Activated CD4-positive, alpha-beta T cell treated with anti-CD3 and anti-CD28 coated beads, Interleukin-2, amount 10 ng/mL, durations not matched to agents 24 days and 14 days (primary cell): ENCODE measurements at regions of chr5 and their contacts with region 1.

Region 1: GRCh38 chr5:171342362-171343111 is 33.5 kb downstream of the TLX3 start:
- DNase-seq: peak; percentile 76
- H3K4me3 Mint-ChIP-seq: no peak overlapping the region
- H3K27ac Mint-ChIP-seq: no peak overlapping the region
- H3K4me1 Mint-ChIP-seq: no peaks in the 10 kb centered on the region
- H3K27me3 Mint-ChIP-seq: peaks cover 7% of the 10 kb centered on the region

Region 2: DNA sequence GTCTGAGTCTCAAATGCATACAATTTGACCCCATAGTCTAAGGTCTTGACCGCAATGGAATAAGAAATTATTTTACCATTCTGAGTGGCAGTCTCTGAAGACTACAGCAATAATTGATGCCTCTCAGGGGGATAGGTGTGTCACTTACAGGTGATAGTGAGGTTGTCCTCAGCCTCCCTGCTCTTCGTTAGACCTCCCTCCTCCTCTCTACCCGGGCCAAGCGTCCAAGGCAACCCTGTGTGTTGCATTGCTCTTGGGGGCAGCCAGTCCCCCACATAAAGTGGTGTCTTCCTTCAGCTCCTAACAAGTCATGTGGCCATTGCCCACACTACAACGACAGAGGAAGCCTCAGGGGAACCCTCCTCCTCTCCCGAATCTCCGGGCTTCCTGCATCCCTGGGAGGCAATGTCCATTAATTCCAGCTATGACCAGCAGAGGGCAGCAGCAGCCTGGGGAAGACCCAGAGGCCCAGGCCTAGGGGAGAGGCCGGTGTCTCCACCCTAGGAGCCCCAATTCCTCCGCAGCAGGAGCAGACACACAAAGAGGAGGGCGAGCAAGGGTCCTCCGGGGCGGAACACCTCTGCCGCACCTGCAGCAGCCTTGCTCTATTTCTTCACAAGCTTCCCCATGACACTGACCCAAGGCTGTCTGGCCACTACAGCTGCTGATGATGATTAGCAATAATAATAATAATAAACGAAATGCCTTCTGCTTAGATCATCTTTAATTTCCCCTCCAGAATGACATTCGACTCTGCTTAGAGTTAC is 703.9 kb before region 1 on chr5:
- intact Hi-C with region 1: loop called (anchors 2 kb)
- DNase-seq: peak; percentile 89
- H3K4me3 Mint-ChIP-seq: no peak overlapping the region
- H3K27ac Mint-ChIP-seq: no peak overlapping the region
- H3K4me1 Mint-ChIP-seq: peaks cover 3% of the 10 kb centered on the region
- H3K27me3 Mint-ChIP-seq: peaks cover 12% of the 10 kb centered on the region

Region 3: DNA sequence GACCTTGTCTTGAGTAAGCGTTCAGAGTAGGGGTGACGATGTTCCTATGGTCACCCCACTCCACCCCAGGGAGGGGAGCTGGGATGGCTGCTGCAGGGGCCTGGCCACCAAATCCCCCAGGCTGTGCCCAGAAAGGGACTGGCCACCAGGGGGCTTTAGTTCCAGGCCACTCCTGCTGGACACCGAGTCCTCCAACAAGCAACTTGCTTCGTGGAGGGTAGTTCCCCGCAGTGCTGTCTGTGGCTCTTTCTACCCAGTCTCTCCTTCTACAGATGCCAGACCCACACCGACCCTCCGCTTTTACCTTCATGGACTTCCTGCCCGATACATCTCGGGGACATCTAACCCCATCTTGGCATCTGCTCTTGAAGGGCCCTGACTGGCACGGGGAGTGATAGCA is 594.7 kb before region 1 on chr5:
- intact Hi-C with region 1: loop called (anchors 10 kb)
- DNase-seq: no peak
- H3K4me3 Mint-ChIP-seq: no peak overlapping the region
- H3K27ac Mint-ChIP-seq: no peak overlapping the region
- H3K4me1 Mint-ChIP-seq: peaks cover 2% of the 10 kb centered on the region
- H3K27me3 Mint-ChIP-seq: peaks cover 13% of the 10 kb centered on the region

Region 4: DNA sequence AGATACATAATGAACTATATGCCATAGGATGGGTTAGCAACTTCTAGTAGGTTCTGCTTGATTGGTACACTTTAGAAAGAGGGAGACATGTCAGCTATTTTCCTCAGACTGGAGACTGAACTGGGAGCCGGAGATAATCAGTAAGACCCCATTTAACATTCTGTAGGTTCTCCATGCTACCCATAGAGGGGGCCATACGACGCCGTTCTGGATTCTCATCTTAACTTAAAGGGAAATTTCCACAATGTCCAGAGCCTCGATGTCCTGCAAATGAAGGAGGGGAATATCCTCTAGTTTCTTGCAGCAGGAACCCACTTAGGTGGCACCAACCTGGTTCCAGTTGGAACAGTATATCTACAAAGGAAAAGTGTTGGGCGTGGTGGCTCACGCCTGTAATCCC is 22.8 kb after region 1 on chr5:
- intact Hi-C with region 1: no loop called
- DNase-seq: no peak
- H3K4me3 Mint-ChIP-seq: no peak overlapping the region
- H3K27ac Mint-ChIP-seq: no peak overlapping the region
- H3K4me1 Mint-ChIP-seq: no peaks in the 10 kb centered on the region
- H3K27me3 Mint-ChIP-seq: peaks cover 16% of the 10 kb centered on the region

Region 5: DNA sequence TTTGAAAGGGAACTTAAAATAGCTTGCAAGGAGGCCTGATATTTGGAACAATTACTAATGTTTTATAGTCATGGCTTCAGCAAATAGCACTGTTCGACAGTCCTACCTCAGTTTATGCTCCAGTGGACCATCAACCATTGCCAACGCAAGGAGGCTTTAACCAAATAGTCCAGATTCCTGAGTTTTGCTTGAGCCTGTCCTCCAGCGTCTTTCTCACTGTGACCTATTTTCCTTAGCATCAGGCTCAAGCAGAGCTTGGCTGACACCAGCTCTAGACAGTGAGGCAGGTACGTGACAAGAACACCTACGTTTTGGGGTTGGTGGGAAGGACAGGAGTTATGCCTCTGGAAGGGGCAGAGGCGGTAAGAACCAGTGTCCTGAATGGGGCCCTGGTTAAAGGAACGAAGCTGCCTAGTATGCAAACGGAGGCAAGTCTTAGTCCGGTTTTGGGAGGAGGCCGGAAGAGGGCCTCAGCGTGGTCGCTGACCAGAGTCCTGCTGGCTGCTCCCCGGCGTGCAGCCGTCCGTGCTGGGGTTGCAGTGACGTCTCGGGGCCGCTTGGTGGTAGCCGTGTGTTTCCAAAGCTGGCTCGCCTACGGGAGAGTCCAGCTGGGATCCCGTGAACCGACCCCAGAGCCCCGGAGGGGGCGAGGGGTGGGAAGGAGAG is 75.9 kb after region 1 on chr5:
- intact Hi-C with region 1: no loop called
- DNase-seq: peak; percentile 88
- H3K4me3 Mint-ChIP-seq: peak overlapping the region; percentile 80
- H3K27ac Mint-ChIP-seq: no peak overlapping the region
- H3K4me1 Mint-ChIP-seq: peaks cover 13% of the 10 kb centered on the region
- H3K27me3 Mint-ChIP-seq: peaks cover 20% of the 10 kb centered on the region

Region 6: GRCh38 chr5:171462928-171463862 is 120.7 kb after region 1 on chr5:
- intact Hi-C with region 1: no loop called
- DNase-seq: no peak
- H3K4me3 Mint-ChIP-seq: no peak overlapping the region
- H3K27ac Mint-ChIP-seq: no peak overlapping the region
- H3K4me1 Mint-ChIP-seq: no peaks in the 10 kb centered on the region
- H3K27me3 Mint-ChIP-seq: no peaks in the 10 kb centered on the region